ENCODE measurements at regions of chr1 and their contacts with region 1.

Region 1: DNA sequence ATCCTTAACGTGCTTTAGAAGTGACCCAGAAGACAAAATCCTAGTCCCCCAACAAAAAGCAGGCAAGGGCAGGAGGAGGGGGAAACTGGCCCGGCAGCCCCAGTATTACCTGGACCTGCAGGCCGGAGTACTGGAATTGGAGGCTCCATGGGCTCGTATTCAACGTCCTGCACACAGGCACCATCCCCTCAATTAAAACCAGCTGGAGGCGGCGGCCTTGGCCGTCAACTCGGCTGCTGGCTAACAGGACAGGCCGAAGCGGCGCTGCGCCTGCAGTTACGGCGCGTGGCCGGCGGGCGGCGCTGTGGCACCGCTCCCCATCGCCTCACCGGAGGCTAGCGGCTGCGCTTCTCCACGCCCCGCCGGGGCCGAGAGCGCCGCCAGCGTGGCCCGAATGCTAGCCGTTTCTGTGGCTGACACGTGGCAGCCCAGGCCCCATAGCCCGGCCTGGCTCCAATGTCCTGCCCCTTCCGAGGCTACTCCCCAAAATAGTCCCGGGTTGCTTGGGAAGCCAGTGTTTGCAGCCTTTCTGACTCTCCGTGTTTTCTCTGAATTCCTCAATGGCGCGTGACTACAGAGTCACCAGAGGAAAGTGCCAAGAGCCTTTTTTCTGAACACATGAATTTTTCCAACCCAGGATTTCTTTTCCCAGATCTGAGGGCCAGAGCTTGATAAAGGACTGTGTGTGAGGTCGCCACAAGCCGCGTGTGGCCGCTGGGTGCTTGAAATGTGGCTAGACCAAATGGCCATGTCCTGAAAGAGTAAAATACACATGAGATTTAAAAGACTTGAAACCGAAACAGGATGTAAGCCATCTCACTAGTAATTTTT is 82.5 kb downstream of the HHIPL2 start:
- DNase-seq: peak; percentile 91
- H3K4me3 ChIP-seq: peak overlapping the region; percentile 55
- H3K27ac ChIP-seq: peak overlapping the region; percentile 64
- H3K4me1 ChIP-seq: no peaks in the 10 kb centered on the region
- H3K27me3 ChIP-seq: no peaks in the 10 kb centered on the region
- CTCF ChIP-seq: peak; percentile 91

Region 2: DNA sequence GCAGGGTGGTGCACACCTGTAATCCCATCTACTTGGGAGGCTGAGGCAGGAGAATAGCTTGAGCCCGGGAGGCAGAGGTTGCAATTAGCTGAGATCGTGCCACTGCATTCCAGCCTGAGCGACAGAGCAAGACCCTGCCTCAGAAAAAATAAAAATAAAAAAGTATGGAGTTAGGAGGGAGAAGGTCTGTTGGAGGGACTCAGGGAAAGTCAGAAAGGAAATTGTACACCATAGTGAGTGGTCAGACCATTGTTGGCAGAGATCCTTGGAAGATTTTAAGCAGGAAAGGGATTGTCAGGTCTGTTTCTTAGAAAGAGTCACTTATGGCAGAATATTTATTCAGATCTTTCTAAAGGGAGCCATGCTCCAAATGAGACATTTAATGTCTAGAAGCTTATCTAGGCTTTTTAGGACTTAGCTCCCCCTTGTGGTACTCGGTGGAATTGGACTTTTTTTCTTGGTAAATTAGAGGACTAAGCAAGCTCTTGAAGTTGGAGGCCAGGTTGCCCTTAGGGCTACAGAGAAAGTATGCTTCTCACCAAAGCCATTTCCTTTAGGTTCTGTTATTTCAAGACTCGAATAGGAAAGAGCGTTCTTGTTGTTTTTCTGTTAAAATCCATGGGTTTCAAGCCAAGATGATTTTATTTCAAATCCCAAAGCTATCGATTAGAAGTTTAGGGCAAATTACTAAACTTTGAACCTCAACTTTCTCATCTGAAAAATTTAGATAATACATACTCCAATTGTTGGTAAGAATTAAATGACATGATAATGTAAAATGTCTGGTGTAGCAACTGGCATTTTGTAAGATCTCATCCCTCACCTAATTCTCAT is 169.0 kb after region 1 on chr1:
- CTCF ChIA-PET with region 1: interaction called, 7 read pairs
- POLR2A ChIA-PET with region 1: no interaction called
- intact Hi-C with region 1: loop called (anchors 1 kb)
- DNase-seq: peak; percentile 93
- H3K4me3 ChIP-seq: no peak overlapping the region
- H3K27ac ChIP-seq: no peak overlapping the region
- H3K4me1 ChIP-seq: no peaks in the 10 kb centered on the region
- H3K27me3 ChIP-seq: no peaks in the 10 kb centered on the region
- CTCF ChIP-seq: peak; percentile 90

Region 3: DNA sequence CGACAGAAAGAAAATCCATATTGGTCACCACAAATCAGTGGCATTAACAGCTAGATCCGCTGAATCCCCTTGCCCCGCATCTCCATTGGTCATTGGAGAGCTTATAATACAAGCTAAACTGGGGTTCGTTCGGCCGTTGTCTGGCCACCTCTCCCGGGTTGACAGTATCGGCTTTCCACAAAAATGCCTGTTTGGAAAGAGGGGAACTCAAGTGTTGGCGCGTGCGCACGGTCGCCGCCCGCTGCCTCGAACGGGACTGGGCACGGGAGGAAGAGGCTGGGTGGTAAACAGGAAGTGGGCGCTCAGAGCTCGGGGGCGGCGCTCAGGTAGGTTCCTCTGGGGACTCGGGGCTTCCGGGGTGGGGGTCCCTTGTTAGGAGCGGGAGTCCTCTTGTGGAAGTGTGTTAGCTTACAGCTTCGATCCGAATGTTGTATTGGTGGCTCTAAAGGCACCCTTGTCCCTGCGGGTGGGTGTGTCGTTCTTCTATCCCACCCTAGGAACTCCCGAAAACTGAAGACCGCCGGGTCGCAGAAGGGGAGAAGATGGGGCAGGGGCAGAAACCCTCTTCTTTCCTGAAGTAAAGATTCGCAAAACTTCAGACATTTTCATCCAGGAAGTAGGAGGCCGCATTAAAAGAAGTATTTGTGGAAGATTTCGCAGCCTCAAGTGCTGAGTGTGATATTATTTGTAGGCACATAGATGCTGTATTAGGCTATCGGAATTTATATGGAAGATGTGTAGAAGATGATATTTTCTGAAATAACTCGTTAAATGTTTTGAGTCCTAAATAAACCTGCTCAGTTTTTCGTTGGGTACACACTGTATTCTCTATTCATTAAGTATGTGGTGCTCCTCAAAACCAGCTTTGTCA is 247.9 kb after region 1 on chr1:
- CTCF ChIA-PET with region 1: no interaction called
- POLR2A ChIA-PET with region 1: no interaction called
- intact Hi-C with region 1: loop called (anchors 1 kb)
- DNase-seq: peak; percentile 98
- H3K4me3 ChIP-seq: peak overlapping the region; percentile 71
- H3K27ac ChIP-seq: peak overlapping the region; percentile 99
- H3K4me1 ChIP-seq: peaks cover 8% of the 10 kb centered on the region
- H3K27me3 ChIP-seq: no peaks in the 10 kb centered on the region
- CTCF ChIP-seq: no peak